ENCODE measurements at regions of chr3 and their contacts with region 1.

Region 1: GRCh38 chr3:147356909-147357900 is 49.1 kb downstream of the ZIC4 start:
- DNase-seq: no peak
- H3K4me3 Mint-ChIP-seq: no peak overlapping the region
- H3K27ac Mint-ChIP-seq: peak overlapping the region; percentile 79
- H3K4me1 Mint-ChIP-seq: no peaks in the 10 kb centered on the region
- H3K27me3 Mint-ChIP-seq: peaks cover 74% of the 10 kb centered on the region

Region 2: GRCh38 chr3:147369661-147370123 is 12.5 kb after region 1 on chr3:
- intact Hi-C with region 1: loop called (anchors 2 kb)
- DNase-seq: no peak
- H3K4me3 Mint-ChIP-seq: no peak overlapping the region
- H3K27ac Mint-ChIP-seq: no peak overlapping the region
- H3K4me1 Mint-ChIP-seq: no peaks in the 10 kb centered on the region
- H3K27me3 Mint-ChIP-seq: peaks cover 55% of the 10 kb centered on the region

Region 3: DNA sequence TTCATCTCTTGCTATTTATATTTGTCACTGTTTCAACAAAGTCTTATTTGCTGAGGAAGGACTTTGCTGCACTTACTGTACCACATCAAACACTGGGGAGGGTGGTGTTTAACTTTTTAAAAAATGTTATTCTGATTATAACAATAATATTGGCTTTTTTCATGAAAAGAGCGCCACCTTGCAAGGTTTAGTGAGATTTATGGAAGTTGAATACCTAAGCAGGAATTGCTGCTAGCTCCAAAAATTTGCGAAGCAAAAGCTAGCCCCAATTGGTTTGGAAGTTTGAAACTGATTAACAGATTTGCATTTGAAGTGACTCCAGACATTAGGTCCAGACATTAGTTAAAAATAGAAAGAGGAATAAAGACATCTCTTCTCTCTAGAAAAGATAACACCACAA is 58.6 kb after region 1 on chr3:
- intact Hi-C with region 1: loop called (anchors 2 kb)
- DNase-seq: no peak
- H3K4me3 Mint-ChIP-seq: no peak overlapping the region
- H3K27ac Mint-ChIP-seq: no peak overlapping the region
- H3K4me1 Mint-ChIP-seq: peaks cover 6% of the 10 kb centered on the region
- H3K27me3 Mint-ChIP-seq: peaks cover 67% of the 10 kb centered on the region

Region 4: GRCh38 chr3:147422601-147423536 is 65.7 kb after region 1 on chr3:
- intact Hi-C with region 1: loop called (anchors 2 kb)
- DNase-seq: no peak
- H3K4me3 Mint-ChIP-seq: no peak overlapping the region
- H3K27ac Mint-ChIP-seq: peak overlapping the region; percentile 31
- H3K4me1 Mint-ChIP-seq: no peaks in the 10 kb centered on the region
- H3K27me3 Mint-ChIP-seq: peaks cover 54% of the 10 kb centered on the region